ENCODE measurements at regions of chr18 and their contacts with region 1.

Region 1: DNA sequence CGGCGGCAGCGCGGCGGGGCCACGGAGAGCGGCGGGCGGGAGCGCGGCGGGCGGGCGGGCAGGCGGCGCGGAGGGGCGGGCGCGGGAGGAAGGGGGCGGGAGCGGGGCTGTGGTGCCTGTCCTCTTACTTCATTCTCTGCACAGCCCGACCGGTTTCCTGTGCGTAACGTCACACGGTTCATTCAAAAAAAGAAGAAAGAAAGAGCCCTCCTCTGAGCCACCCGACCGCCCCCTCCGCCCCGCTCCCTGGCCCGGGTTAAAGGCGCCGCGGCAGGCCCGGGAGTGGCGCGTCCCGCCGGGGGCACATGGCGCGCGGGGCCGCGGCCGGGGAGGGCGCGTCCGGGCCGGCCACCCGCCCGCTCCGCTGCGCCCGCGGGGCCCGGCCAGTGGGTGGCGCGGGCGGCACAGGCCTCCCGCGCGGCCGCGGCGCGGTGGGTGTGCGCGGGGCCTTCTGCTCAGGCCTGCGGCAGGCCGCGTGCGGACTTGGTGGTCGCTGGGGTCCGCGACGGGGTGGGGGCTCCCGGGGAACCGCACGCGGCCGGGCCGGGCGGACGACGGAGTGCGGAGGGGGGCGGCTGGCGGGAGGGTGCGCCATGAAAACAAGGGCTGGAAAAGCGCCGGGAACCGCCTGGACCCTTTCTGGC is 599 bp upstream of the BCL2 start:
- DNase-seq: peak; percentile 96
- H3K4me3 Mint-ChIP-seq: peak overlapping the region; percentile 99
- H3K27ac Mint-ChIP-seq: peak overlapping the region; percentile 97
- H3K4me1 Mint-ChIP-seq: peaks cover 25% of the 10 kb centered on the region
- H3K27me3 Mint-ChIP-seq: no peaks in the 10 kb centered on the region

Region 2: GRCh38 chr18:62522504-62523254 is 797.5 kb before region 1 on chr18 and contains the start of gene ZCCHC2:
- intact Hi-C with region 1: loop called (anchors 5 kb)
- DNase-seq: peak; percentile 100
- H3K4me3 Mint-ChIP-seq: peak within 1 kb of the TSS; percentile 93
- H3K27ac Mint-ChIP-seq: peak within 1 kb of the TSS; percentile 94
- H3K4me1 Mint-ChIP-seq: peaks cover 21% of the 10 kb centered on the region
- H3K27me3 Mint-ChIP-seq: no peaks in the 10 kb centered on the region
- total RNA-seq, gene ZCCHC2: 47.0 and 52.8 TPM in 2 replicates

Region 3: DNA sequence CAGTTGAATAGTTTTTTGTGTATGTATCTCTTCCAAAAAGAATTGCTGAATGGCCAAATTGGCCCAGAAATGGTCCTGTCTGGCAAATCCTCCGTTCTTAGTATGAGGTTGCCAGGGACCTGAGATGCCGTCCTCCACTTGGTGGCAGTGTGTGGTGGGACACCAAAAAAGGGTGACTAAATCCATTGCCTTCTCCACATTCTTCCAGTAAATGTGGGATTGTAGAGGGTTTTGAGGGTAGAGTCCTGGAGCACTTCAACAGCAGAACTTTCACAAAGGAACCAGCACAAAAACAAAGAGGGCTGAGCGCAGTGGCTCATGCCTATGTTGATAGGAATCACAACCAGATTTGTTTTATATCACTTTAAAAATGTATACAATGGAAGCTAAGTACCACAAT is 200.5 kb before region 1 on chr18:
- intact Hi-C with region 1: loop called (anchors 1 kb)
- DNase-seq: no peak
- H3K4me3 Mint-ChIP-seq: no peak overlapping the region
- H3K27ac Mint-ChIP-seq: no peak overlapping the region
- H3K4me1 Mint-ChIP-seq: peaks cover 4% of the 10 kb centered on the region
- H3K27me3 Mint-ChIP-seq: peaks cover 33% of the 10 kb centered on the region

Region 4: DNA sequence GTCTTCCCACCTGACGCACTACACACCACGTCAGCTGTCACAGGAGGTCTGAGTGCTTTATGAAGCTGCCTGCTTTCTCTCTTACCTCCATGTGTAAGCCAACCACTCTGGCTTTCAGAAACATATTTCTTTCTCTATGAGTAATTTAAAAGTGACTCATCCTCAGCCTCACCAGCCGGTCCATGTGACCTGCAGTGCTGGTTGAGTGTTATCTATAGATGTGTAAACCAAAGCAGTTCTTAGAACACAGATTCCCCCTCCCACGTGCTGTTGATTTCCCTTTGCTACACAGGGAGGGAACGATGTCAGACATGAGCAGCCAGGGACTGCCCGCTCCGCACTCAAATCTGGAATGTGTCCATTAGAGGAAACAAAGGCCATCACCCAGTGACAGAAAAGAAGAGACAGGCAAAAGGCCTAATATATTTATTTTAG is 158.4 kb before region 1 on chr18:
- intact Hi-C with region 1: loop called (anchors 1 kb)
- DNase-seq: peak; percentile 94
- H3K4me3 Mint-ChIP-seq: peak overlapping the region; percentile 83
- H3K27ac Mint-ChIP-seq: peak overlapping the region; percentile 98
- H3K4me1 Mint-ChIP-seq: peaks cover 87% of the 10 kb centered on the region
- H3K27me3 Mint-ChIP-seq: no peaks in the 10 kb centered on the region

Region 5: GRCh38 chr18:63207143-63207790 is 112.9 kb before region 1 on chr18:
- intact Hi-C with region 1: no loop called
- DNase-seq: peak; percentile 75
- H3K4me3 Mint-ChIP-seq: peak overlapping the region; percentile 89
- H3K27ac Mint-ChIP-seq: peak overlapping the region; percentile 93
- H3K4me1 Mint-ChIP-seq: peaks cover 80% of the 10 kb centered on the region
- H3K27me3 Mint-ChIP-seq: no peaks in the 10 kb centered on the region

Region 6: GRCh38 chr18:63267975-63268721 is 52.0 kb before region 1 on chr18:
- intact Hi-C with region 1: loop called (anchors 2 kb)
- DNase-seq: peak; percentile 72
- H3K4me3 Mint-ChIP-seq: peak overlapping the region; percentile 41
- H3K27ac Mint-ChIP-seq: peak overlapping the region; percentile 61
- H3K4me1 Mint-ChIP-seq: peaks cover 65% of the 10 kb centered on the region
- H3K27me3 Mint-ChIP-seq: no peaks in the 10 kb centered on the region

Region 7: GRCh38 chr18:63367053-63367953 is 47.1 kb after region 1 on chr18 and contains the start of gene KDSR:
- intact Hi-C with region 1: loop called (anchors 1 kb)
- DNase-seq: peak; percentile 96
- H3K4me3 Mint-ChIP-seq: peak within 1 kb of the TSS; percentile 91
- H3K27ac Mint-ChIP-seq: peak within 1 kb of the TSS; percentile 81
- H3K4me1 Mint-ChIP-seq: peaks cover 29% of the 10 kb centered on the region
- H3K27me3 Mint-ChIP-seq: no peaks in the 10 kb centered on the region
- total RNA-seq, gene KDSR: 83.9 and 86.9 TPM in 2 replicates

Region 8: DNA sequence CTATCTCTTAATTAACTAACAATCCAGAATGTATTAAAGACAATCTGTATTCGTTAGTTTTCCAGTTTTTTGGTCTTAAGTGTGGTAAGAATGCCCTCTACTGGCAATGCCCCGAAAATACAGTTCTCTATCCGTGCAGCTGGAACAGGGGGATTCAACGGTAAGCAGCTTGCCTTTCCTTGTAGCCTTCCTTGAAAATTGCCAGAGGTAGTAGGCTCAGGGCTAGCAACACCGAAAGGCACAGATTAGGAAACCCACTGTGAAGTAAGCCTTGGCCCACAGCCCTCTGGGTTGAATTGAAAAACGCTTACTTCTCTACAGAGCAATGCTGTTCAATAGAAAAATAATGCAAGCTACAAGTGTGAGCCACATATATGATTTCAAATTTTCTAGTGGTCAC is 119.2 kb after region 1 on chr18:
- intact Hi-C with region 1: loop called (anchors 2 kb)
- DNase-seq: peak; percentile 85
- H3K4me3 Mint-ChIP-seq: no peak overlapping the region
- H3K27ac Mint-ChIP-seq: no peak overlapping the region
- H3K4me1 Mint-ChIP-seq: no peaks in the 10 kb centered on the region
- H3K27me3 Mint-ChIP-seq: peaks cover 29% of the 10 kb centered on the region

Region 9: GRCh38 chr18:63562284-63562683 is 242.1 kb after region 1 on chr18:
- intact Hi-C with region 1: no loop called
- DNase-seq: peak; percentile 40
- H3K4me3 Mint-ChIP-seq: no peak overlapping the region
- H3K27ac Mint-ChIP-seq: no peak overlapping the region
- H3K4me1 Mint-ChIP-seq: no peaks in the 10 kb centered on the region
- H3K27me3 Mint-ChIP-seq: peaks cover 9% of the 10 kb centered on the region

Measured in activated CD4-positive, alpha-beta T cell treated with anti-CD3 and anti-CD28 coated beads, Interleukin-2, amount 10 ng/mL, durations not matched to agents 24 days and 14 days (primary cell).